HEK293T (cell line): ENCODE measurements at regions of chr20 and their contacts with region 1.

Region 1: DNA sequence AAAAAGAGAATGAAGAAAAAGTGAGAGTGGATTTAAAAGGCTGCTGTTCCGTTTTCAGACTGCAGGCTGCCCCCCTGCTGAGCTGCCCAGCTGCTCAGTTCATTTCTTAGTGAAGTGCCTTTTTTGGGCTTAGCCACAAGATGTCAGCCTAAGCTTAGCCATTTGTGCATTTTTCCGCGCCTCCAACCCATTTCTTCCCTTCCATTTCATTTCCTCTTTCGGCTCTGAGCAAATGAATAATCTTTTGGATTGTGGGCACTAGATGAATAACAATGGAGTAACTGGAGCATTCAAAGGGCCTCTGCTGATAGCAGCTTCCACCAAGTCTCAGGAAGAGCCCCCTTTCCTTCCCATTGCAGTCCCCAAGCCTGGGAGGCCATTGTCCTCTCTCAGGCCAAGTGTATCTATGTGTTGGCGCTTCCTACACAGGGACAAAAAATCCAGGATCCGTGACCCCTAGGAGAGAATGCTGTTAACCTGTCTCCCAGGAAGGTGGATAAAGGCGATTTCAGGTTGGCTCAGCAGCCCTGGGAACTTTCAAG is 83.5 kb upstream of the SPTLC3 start:
- DNase-seq: peak; percentile 80

Region 2: GRCh38 chr20:12849225-12849910 is 75.9 kb before region 1 on chr20:
- CTCF ChIA-PET with region 1: no interaction called
- POLR2A ChIA-PET with region 1: no interaction called
- DNase-seq: no peak

Region 3: GRCh38 chr20:12966468-12967341 is 41.4 kb after region 1 on chr20:
- CTCF ChIA-PET with region 1: interaction called, 14 read pairs
- POLR2A ChIA-PET with region 1: interaction called, 4 read pairs
- DNase-seq: no peak

Region 4: GRCh38 chr20:13105864-13106457 is 180.7 kb after region 1 on chr20:
- CTCF ChIA-PET with region 1: interaction called, 13 read pairs
- POLR2A ChIA-PET with region 1: no interaction called
- DNase-seq: peak; percentile 8